ENCODE measurements at regions of chr7 and their contacts with region 1.

Region 1: DNA sequence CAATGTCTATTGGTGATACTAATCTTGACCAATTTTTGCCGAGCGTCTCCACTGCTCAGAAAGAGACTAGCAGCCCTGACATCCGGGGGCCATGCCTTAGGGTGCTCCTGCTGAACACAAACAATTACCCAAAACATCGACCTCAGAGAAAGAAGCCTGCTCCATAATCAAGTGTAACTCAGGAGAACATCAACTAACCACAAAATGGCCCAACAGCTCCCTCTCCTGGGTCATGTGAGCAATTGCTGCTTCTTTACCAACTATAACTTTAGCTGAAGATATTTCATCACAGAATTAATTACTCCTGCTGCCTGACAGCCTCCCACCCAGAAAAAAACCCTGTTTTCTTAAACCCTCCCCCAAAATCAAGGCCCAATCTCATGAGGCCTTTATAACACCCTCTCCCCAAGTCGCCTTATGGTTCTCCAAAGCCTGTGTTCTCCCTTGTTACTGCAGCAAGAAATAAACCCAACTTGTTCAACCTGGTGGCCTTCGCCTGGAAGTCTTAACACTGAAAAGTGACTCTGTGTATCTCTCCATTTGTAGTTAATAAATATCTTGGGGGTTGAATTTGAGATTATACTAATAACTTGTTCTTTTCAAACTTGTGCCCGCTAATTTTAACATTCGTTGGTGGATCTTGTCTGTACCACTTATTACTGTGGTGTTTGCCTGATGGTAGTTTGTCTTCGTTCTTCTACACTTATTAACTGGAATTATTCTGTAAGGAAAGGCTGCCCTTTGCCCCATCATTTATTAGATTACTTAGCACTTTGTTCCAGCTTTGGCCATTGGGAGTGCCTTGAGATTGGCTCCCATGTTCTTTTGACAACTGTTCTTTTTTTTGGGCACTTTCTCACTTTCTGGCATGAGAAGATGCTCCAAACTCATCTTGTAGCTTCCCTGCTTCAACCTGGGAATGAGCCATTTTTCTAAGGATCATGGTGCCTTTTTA is 21.2 kb upstream of the RAMP3 start:
- DNase-seq: peak in 7 of 10 donors; percentile 38 to 88 (median 64)

Region 2: GRCh38 chr7:44587843-44588711 is 548.3 kb before region 1 on chr7:
- intact Hi-C with region 1: loop called (anchors 5 kb)
- DNase-seq: peak in 2 of 10 donors; percentile 28 to 36

Region 3: DNA sequence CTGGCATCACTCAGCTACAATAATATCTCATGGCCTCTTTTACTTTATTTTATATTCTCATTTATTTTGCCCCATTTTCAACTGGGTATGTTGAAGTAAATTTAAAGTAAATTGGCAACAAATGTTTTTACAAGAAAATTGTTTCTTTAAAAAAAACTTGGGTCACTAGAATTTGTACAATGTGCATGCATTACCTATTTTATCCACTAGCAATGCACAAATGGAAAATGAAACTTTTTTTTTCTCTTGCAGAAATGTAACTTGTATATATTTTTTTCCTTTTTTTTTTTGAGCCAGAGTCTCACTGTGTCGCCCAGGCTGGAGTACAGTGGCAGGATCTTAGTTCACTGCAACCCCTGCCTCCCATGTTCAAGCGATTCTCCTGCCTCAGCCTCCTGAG is 278.2 kb before region 1 on chr7:
- intact Hi-C with region 1: loop called (anchors 5 kb)
- DNase-seq: no peak

Region 4: DNA sequence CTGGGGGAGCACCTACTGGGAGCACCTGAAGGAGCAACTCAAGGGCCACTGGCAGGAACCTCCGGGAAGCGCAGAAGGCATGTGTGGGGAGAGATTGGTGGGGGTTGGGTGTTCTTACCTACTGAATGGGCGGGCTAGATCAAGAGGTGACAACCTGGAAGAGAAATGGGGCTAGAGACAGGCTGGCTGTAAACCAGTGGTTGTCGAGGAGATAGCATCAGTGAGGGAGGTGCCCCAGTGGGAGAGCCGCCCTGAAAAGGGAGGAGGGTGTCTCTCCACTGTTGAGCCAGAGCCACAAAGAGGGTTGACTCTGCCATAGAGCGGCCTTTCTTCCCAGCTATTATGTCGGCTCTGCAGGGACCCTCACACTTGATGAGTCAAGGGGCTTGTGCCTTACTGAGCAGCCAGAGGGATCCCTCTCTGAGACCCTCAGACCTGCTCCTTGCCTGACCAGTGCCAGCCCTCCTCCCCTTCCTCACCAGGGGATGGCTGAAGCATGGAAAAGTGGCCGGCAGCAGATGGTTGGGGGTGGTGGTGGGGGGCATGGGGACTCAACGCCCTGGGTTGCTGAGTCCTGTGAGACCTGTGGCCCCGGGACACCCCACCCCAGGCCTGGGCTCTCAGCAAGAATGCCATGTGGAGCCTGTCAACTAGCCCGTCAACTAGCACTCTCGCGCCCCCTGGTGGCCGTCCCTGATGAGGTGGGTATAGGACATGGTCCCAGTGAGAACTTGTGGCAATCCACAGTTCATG is 214.6 kb before region 1 on chr7:
- intact Hi-C with region 1: loop called (anchors 5 kb)
- DNase-seq: peak; percentile 77 to 98 (median 94)

Region 5: GRCh38 chr7:45089341-45089891 is 47.0 kb before region 1 on chr7:
- intact Hi-C with region 1: loop called (anchors 10 kb)
- DNase-seq: peak; percentile 93 to 100 (median 98)

Region 6: GRCh38 chr7:45215601-45216062 is 79.2 kb after region 1 on chr7:
- intact Hi-C with region 1: no loop called
- DNase-seq: peak in 5 of 10 donors; percentile 39 to 92 (median 66)